Mammary epithelial cell (primary cell): ENCODE measurements at regions of chr10 and their contacts with region 1.

Region 1: GRCh38 chr10:52779541-52780390 is 7.2 kb upstream of the MBL2 start:
- DNase-seq: peak; percentile 37
- H3K4me3 ChIP-seq: no peak overlapping the region
- H3K27ac ChIP-seq: no peak overlapping the region
- H3K4me1 ChIP-seq: no peaks in the 10 kb centered on the region
- H3K27me3 ChIP-seq: no peaks in the 10 kb centered on the region
- CTCF ChIP-seq: peak; percentile 96 to 99

Region 2: DNA sequence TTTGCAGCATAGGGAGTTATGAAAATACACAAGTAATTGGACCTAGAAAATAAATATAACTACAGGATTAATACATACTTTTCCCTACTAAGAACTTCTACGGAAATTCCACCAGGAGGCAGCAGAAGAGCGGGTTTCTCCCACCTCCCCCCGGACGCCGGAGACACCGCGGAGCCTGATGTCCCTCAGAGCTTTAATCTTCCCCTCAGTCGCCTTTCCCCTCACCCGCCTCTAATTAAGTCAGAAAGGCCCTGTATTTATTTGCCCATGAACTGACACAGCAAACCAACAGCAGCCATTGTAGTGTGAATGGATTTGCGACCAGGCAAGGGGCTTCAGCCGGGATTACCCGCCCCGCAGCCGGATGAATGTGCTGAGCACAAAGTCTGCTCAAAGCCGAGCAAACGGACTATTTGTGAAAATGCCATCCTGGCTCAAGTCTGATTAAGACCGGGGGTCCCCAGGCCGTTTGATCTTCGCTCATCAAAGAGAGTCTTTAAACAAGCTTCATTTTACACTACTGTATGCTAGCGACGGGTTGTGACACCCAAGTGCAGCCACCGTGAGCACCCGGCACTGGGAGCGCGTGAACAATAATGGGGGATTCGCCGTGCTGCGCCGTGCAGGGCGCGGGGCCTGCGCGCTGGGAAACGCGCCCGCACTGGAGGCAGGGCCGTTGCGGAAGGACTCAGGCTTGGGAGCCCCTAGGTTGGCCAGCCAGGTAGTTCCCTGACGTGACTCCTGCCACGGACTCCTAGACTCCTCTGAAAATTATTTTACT is 471.3 kb before region 1 on chr10:
- CTCF ChIA-PET with region 1: no interaction called
- dilution Hi-C with region 1: no loop called
- in situ Hi-C with region 1: no loop called
- intact Hi-C with region 1: loop called (anchors 2 kb)
- DNase-seq: peak; percentile 45
- H3K4me3 ChIP-seq: peak overlapping the region; percentile 42 to 50 (median 45)
- H3K27ac ChIP-seq: peak overlapping the region; percentile 40
- H3K4me1 ChIP-seq: peaks cover 17% of the 10 kb centered on the region
- H3K27me3 ChIP-seq: no peaks in the 10 kb centered on the region
- CTCF ChIP-seq: peak; percentile 46 to 72

Region 3: GRCh38 chr10:52740913-52741675 is 38.7 kb before region 1 on chr10:
- CTCF ChIA-PET with region 1: interaction called, 7 read pairs
- dilution Hi-C with region 1: no loop called
- in situ Hi-C with region 1: loop called (anchors 5 kb)
- intact Hi-C with region 1: loop called (anchors 1 kb)
- DNase-seq: no peak
- H3K4me3 ChIP-seq: no peak overlapping the region
- H3K27ac ChIP-seq: no peak overlapping the region
- H3K4me1 ChIP-seq: peaks cover 11% of the 10 kb centered on the region
- H3K27me3 ChIP-seq: no peaks in the 10 kb centered on the region
- CTCF ChIP-seq: peak; percentile 90 to 97

Region 4: DNA sequence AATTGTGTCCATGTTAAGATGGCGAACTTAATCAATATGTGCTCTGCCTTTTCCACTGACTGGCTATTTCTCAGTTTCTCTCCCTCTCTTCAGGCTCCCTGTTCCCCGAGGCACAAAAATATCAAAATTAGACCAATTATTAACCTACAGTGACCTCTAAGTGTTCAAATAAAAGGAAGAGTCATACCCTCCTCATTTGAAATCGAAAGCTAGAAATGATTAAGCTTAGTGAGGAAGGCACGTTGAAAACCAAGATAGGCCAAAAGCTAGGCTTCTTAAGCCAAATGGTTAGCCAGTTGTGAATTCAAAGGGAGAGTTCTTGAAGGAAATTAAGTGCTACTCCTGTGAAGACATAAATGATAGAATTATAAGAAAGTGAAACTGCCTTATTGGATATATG is 73.9 kb after region 1 on chr10:
- CTCF ChIA-PET with region 1: no interaction called
- dilution Hi-C with region 1: no loop called
- in situ Hi-C with region 1: no loop called
- intact Hi-C with region 1: no loop called
- DNase-seq: no peak
- H3K4me3 ChIP-seq: no peak overlapping the region
- H3K27ac ChIP-seq: no peak overlapping the region
- H3K4me1 ChIP-seq: peaks cover 2% of the 10 kb centered on the region
- H3K27me3 ChIP-seq: no peaks in the 10 kb centered on the region
- CTCF ChIP-seq: no peak